Transverse colon (tissue), 4 donors: ENCODE measurements at regions of chr12 and their contacts with region 1.

Region 1: GRCh38 chr12:71938728-71939385 is at the start of gene TPH2:
- DNase-seq: peak; percentile 9
- H3K4me3 ChIP-seq: no peak within 1 kb of the TSS
- H3K27ac ChIP-seq: no peak within 1 kb of the TSS
- H3K4me1 ChIP-seq: no peaks in the 10 kb centered on the region
- H3K27me3 ChIP-seq: peaks cover 57% of the 10 kb centered on the region
- CTCF ChIP-seq: peak in 4 of 5 experiments; percentile 12 to 28 (median 22)
- EP300 ChIP-seq: no peak
- POLR2A ChIP-seq: no peak
- total RNA-seq, gene TPH2: not detected

Region 2: GRCh38 chr12:71969330-71969729 is 30.5 kb after region 1 on chr12:
- in situ Hi-C with region 1: no loop called
- intact Hi-C with region 1: loop called (anchors 1 kb)
- DNase-seq: no peak
- H3K4me3 ChIP-seq: no peak overlapping the region
- H3K27ac ChIP-seq: no peak overlapping the region
- H3K4me1 ChIP-seq: no peaks in the 10 kb centered on the region
- H3K27me3 ChIP-seq: peaks cover 6% of the 10 kb centered on the region
- CTCF ChIP-seq: no peak
- EP300 ChIP-seq: no peak
- POLR2A ChIP-seq: no peak